PC-3 (cell line): ENCODE measurements at regions of chr1 and their contacts with region 1.

Region 1: GRCh38 chr1:78884685-78885452 is 121.7 kb downstream of the ADGRL4 start:
- DNase-seq: no peak
- ATAC-seq: no peak
- H3K4me3 ChIP-seq: no peak overlapping the region
- H3K27ac ChIP-seq: no peak overlapping the region
- H3K4me1 ChIP-seq: no peaks in the 10 kb centered on the region
- H3K27me3 ChIP-seq: no peaks in the 10 kb centered on the region
- CTCF ChIP-seq: no peak

Region 2: GRCh38 chr1:78737241-78737640 is 147.6 kb before region 1 on chr1:
- CTCF ChIA-PET with region 1: no interaction called
- POLR2A ChIA-PET with region 1: no interaction called
- intact Hi-C with region 1: no loop called
- DNase-seq: no peak
- ATAC-seq: no peak
- H3K4me3 ChIP-seq: no peak overlapping the region
- H3K27ac ChIP-seq: no peak overlapping the region
- H3K4me1 ChIP-seq: no peaks in the 10 kb centered on the region
- H3K27me3 ChIP-seq: no peaks in the 10 kb centered on the region
- CTCF ChIP-seq: no peak

Region 3: DNA sequence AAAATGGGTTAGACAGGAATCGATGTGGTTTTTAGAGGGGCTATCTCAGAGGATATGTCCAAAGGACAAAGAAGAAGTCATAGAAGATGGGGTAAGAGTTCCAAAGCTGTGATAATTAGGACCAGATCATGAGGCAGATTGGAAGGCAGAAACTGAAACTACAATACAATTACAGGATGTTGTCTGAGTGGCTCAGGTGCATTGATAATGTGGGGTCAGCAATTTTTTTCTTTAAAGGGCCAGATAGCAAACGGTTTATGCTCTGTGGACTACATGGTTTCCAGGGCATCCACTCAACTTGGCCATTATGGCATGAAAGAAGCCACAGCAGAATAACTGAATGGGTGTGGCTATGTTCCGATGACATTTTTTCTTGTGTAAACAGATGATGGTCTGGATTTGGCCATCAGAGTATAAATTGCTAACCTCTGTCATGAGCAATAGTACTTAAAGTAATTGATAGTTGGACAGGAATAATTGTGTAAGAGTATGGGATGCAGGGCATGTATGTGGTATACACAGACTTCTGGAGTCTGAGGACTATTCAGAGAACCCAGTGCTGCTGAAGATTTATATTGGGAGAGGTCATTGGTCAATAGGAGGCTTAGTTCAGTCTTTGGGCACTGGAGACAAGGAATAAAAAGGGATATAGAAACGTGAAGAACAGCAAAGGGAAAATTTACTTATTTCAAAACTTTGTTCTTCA is 320.1 kb after region 1 on chr1:
- CTCF ChIA-PET with region 1: no interaction called
- POLR2A ChIA-PET with region 1: interaction called, 23 read pairs
- intact Hi-C with region 1: no loop called
- DNase-seq: peak; percentile 43
- ATAC-seq: no peak
- H3K4me3 ChIP-seq: no peak overlapping the region
- H3K27ac ChIP-seq: no peak overlapping the region
- H3K4me1 ChIP-seq: 0 out of 2 replicates have a peak, but pooled peaks cover 4% of the 10 kb centered on the region
- H3K27me3 ChIP-seq: no peaks in the 10 kb centered on the region
- CTCF ChIP-seq: no peak